ENCODE measurements at regions of chr20 and their contacts with region 1.

Region 1: DNA sequence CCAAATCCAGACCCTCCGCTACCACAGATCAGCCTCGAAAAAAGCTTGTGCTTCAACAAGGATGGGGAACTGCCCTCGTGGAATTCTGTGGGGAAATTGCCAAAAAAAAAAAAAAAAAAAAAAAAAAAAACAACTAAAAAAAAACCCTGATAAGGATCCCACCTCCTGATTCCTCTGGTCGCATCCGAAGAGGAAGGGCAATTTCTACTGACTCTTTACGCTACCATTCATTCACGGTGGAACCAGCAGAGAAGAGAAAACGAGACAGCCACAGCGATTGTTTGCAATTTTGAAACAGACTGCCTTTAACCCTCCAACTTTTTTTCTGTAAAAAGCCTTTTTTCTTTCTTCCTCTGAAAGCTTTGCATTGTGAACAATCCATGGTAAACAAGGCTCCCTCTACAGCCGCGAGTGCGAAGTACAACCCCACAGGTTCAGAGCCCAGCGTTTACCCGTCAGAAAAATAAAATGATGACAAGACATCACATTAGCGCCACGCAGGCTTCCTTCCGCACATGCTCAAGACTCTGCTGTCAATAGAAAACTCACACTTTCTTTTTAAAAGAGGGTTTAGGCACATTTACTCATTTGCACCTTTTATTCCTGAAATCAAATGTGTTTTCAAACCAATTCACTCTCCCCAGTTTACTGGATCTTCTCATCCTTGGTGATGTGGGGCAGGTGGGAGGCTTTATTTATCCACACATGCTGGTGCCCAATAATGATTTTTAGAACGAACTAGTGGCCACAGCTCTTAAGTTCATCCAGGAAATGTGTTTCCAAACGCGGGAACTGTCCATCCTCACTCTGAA is 100.0 kb downstream of the NOL4L start:
- DNase-seq: peak; percentile 78 to 81
- H3K4me3 ChIP-seq: peak overlapping the region in 1 of 3 donors; percentile 89
- H3K27ac ChIP-seq: peak overlapping the region; percentile 64 to 90 (median 83)
- H3K4me1 ChIP-seq: peaks cover 23 to 26% of the 10 kb centered on the region in 2 donors
- H3K27me3 ChIP-seq: no peaks in the 10 kb centered on the region
- CTCF ChIP-seq: peak; percentile 59 to 80 (median 77)
- POLR2A ChIP-seq: no peak

Region 2: DNA sequence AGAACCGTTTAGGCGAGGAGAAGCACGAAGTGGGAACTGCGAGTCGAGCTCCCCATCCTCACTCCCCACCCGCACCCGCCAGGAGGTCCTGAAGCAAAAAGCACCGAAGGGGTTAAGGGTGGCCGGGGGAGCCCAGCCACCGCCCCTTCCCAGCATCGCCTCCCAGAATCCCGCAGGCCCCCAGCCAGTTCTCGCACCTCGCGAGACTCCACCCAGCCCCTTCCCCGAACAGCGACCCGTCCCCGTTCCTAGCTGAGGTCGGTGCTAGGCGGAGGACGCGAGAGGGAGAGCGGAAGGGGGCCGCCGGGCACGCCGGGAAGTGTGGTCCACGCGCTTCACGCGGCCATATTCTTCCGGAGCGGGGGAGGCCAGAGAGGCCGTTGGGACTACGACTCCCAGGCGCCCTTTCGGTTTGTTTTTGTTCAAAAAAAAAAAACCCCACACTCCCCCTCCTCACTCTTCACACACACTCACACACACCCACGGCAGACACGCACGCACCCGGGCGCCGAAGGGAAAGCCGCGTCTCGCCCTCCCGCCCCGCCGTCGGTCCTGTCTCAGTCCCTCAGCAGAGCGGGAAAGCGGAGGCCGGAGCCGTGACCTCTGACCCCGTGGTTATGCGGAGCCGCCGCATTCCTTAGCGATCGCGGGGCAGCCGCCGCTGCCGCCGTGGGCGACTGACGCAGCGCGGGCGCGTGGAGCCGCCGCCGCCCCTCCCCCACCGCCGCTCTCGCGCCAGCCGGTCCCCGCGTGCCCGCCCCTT is 127.1 kb before region 1 on chr20 and contains the start of gene ASXL1:
- intact Hi-C with region 1: loop called (anchors 5 kb)
- DNase-seq: peak; percentile 97 to 98
- H3K4me3 ChIP-seq: peak within 1 kb of the TSS; percentile 45 to 89 (median 58)
- H3K27ac ChIP-seq: peak within 1 kb of the TSS; percentile 95 to 97 (median 96)
- H3K4me1 ChIP-seq: peaks cover 30 to 37% of the 10 kb centered on the region in 2 donors
- H3K27me3 ChIP-seq: no peaks in the 10 kb centered on the region
- CTCF ChIP-seq: peak in 1 of 6 experiments; percentile 24
- POLR2A ChIP-seq: peak in 1 of 2 donors; percentile 64
- total RNA-seq, gene ASXL1: 62.1 to 155 (median 67.5) TPM

Region 3: DNA sequence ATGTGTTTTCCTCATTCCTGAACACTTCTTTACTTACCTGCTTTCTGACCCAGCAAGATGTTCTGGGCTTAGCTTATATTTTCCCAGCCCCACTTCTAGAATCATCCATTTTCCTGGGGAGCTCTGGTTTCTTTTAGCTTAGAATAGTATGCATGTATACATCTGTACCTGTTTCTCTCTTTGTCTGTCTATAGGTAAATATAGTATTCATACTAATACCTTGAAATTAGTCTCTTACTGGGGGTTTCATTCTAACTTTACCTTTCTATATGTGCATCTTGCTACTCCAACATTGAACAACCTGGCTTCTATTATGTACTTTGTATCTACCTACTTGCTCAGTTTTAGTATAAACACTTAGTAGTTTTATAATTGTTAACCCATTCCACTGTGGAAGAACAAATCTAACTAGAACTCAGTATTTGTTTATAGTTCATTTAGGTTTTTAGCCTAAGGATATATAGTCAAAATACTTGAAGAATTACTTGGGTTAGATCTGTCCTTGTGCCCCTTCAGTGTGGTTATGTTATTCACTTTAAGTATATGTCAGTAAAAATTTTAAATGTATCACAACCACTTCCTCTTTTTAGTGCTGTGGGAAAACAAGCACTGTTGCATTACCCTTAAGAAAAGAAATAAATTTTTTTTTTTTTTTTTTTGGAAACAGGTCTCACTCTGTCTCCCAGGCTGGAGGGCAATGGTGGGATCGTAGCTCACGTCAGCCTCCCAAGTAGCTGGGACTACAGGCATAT is 73.0 kb before region 1 on chr20:
- intact Hi-C with region 1: no loop called
- DNase-seq: no peak
- H3K4me3 ChIP-seq: no peak overlapping the region
- H3K27ac ChIP-seq: no peak overlapping the region
- H3K4me1 ChIP-seq: peaks cover 0 to 4% of the 10 kb centered on the region in 2 donors
- H3K27me3 ChIP-seq: no peaks in the 10 kb centered on the region
- CTCF ChIP-seq: no peak
- POLR2A ChIP-seq: no peak

Region 4: GRCh38 chr20:32589256-32589655 is 104.1 kb after region 1 on chr20:
- intact Hi-C with region 1: no loop called
- DNase-seq: no peak
- H3K4me3 ChIP-seq: no peak overlapping the region
- H3K27ac ChIP-seq: no peak overlapping the region
- H3K4me1 ChIP-seq: peaks cover 0 to 4% of the 10 kb centered on the region in 2 donors
- H3K27me3 ChIP-seq: no peaks in the 10 kb centered on the region
- CTCF ChIP-seq: no peak
- POLR2A ChIP-seq: no peak

Measured in thyroid gland (tissue), 4 donors.